ENCODE measurements at regions of chr9 and their contacts with region 1.

Region 1: GRCh38 chr9:132806723-132807421 is 71.2 kb downstream of the AK8 start:
- DNase-seq: no peak
- H3K4me3 ChIP-seq: no peak overlapping the region
- H3K27ac ChIP-seq: no peak overlapping the region
- H3K4me1 ChIP-seq: peaks cover 0 to 31% (median 21%) of the 10 kb centered on the region in 4 experiments
- H3K27me3 ChIP-seq: peaks cover 0 to 6% (median 0%) of the 10 kb centered on the region in 5 experiments

Region 2: DNA sequence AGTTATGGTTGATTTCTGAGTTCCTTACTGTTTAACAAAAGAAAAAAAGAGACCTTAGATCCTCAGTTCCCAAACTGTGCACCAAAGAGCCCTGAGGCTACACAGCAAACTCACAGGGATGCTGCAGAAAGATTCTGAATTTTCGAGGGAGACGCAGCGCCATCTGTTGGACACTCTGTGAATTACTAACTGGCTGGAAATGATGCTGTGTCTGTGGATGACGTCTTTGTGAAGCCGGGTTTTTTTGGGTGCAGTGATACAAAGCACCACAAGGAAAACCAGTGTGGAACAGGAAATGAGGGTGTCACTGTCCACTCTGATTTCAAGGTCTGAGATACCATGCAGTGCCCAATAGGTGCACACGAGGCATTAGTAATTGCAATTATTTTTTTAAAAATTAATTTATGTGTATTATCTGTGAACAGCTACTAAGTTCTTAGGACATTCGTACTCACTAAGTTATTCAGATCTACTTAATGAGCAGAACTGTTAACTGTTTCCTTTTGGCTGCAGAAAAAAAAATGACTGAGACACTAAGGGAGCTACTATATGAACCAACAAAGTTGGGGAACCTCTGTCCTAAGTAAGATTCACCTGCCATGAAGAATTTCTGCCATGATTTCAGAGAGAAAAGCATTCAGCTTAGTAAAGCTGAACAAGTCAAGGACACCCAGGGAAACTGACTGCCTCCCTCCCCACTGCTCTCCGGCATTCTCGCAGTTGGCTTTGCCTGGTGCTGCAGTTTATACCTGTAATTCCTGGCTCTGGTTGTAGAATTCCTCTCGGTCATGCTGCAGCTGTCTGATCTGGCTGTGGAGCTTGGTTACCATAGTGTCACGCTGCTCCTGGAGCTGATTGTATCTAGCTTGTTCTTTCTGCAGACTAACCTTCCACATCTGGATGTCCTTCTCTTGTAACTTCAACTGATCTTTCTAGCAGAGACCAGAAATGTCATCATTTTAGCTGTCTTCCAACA is 95.3 kb after region 1 on chr9:
- CTCF ChIA-PET with region 1: interaction called, 11 read pairs
- POLR2A ChIA-PET with region 1: interaction called, 3 read pairs
- DNase-seq: peak; percentile 87 to 95 (median 92)
- H3K4me3 ChIP-seq: no peak overlapping the region
- H3K27ac ChIP-seq: no peak overlapping the region
- H3K4me1 ChIP-seq: no peaks in the 10 kb centered on the region
- H3K27me3 ChIP-seq: no peaks in the 10 kb centered on the region